Ascending aorta (tissue), 2 donors: ENCODE measurements at regions of chr2 and their contacts with region 1.

Region 1: GRCh38 chr2:26785431-26786206 is at the start of gene CENPA:
- DNase-seq: peak; percentile 96 to 99
- H3K4me3 ChIP-seq: peak within 1 kb of the TSS; percentile 88 to 96
- H3K27ac ChIP-seq: no peak within 1 kb of the TSS
- H3K4me1 ChIP-seq: peaks cover 0 to 14% of the 10 kb centered on the region in 2 donors
- H3K27me3 ChIP-seq: no peaks in the 10 kb centered on the region
- CTCF ChIP-seq: peak in 1 of 3 experiments; percentile 28
- total RNA-seq, gene CENPA: not detected

Region 2: GRCh38 chr2:26764078-26764887 is 21.3 kb before region 1 on chr2 and contains the start of gene SLC35F6:
- intact Hi-C with region 1: loop called (anchors 1 kb)
- DNase-seq: peak in 1 of 2 donors; percentile 89
- H3K4me3 ChIP-seq: peak within 1 kb of the TSS; percentile 75 to 96
- H3K27ac ChIP-seq: peak within 1 kb of the TSS; percentile 86 to 97
- H3K4me1 ChIP-seq: peaks cover 7 to 31% of the 10 kb centered on the region in 2 donors
- H3K27me3 ChIP-seq: no peaks in the 10 kb centered on the region
- CTCF ChIP-seq: no peak
- total RNA-seq, gene SLC35F6: 43.4 TPM

Region 3: GRCh38 chr2:26816893-26817292 is 31.3 kb after region 1 on chr2:
- intact Hi-C with region 1: no loop called
- DNase-seq: no peak
- H3K4me3 ChIP-seq: no peak overlapping the region
- H3K27ac ChIP-seq: no peak overlapping the region
- H3K4me1 ChIP-seq: no peaks in the 10 kb centered on the region
- H3K27me3 ChIP-seq: no peaks in the 10 kb centered on the region
- CTCF ChIP-seq: no peak